ENCODE measurements at regions of chr10 and their contacts with region 1.

Region 1: DNA sequence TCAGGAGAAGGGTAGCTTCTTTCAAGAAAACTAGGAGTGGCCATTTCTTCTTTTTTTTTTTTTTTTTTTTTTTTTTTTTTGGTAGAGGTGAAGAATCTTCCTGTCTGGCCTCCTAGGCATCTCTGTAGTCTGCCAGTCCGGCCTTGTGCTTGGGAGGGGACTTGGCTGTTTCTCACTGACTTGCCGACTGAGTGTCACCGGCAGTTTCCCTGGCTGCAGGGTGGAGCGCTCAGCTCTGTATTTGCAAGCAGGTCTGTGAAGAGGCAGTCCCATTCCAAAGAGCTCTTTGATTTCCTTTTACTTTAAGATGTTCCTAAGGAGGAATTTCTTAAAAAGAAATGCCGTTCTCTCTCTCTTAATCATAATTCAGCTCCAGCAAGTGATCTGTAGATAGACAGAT is 212.6 kb downstream of the ADRA2A start:
- DNase-seq: no peak
- H3K4me3 ChIP-seq: no peak overlapping the region
- H3K27ac ChIP-seq: no peak overlapping the region
- H3K4me1 ChIP-seq: no peaks in the 10 kb centered on the region
- H3K27me3 ChIP-seq: no peaks in the 10 kb centered on the region
- CTCF ChIP-seq: no peak
- POLR2A ChIP-seq: no peak

Region 2: GRCh38 chr10:111344804-111345203 is 55.3 kb after region 1 on chr10:
- intact Hi-C with region 1: no loop called
- DNase-seq: no peak
- H3K4me3 ChIP-seq: no peak overlapping the region
- H3K27ac ChIP-seq: no peak overlapping the region
- H3K4me1 ChIP-seq: no peaks in the 10 kb centered on the region
- H3K27me3 ChIP-seq: no peaks in the 10 kb centered on the region
- CTCF ChIP-seq: no peak
- POLR2A ChIP-seq: no peak

Region 3: GRCh38 chr10:111360260-111360925 is 70.9 kb after region 1 on chr10:
- intact Hi-C with region 1: no loop called
- DNase-seq: peak in 1 of 2 donors; percentile 24
- H3K4me3 ChIP-seq: no peak overlapping the region
- H3K27ac ChIP-seq: no peak overlapping the region
- H3K4me1 ChIP-seq: no peaks in the 10 kb centered on the region
- H3K27me3 ChIP-seq: no peaks in the 10 kb centered on the region
- CTCF ChIP-seq: peak in 1 of 3 donors; percentile 38
- POLR2A ChIP-seq: no peak

Region 4: DNA sequence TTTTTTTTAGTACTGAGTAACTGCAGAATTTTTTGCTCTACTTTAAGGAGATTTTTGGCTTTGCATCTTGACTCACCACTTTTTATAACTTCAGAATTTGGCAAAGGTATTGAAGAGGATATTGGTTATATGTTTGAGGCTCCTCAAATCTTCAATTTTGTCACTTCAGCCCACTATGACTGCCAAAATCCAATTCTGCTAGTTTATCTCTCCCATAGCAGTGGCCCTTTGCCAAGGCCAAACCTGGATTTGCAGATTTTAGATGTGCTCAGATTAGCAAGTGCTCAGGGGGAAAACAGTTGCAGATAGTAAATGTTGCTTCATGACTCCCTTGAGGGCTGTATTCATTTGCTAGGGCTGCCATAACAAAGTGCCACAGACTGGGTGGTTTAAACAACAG is 214.9 kb after region 1 on chr10:
- intact Hi-C with region 1: loop called (anchors 5 kb)
- DNase-seq: no peak
- H3K4me3 ChIP-seq: no peak overlapping the region
- H3K27ac ChIP-seq: no peak overlapping the region
- H3K4me1 ChIP-seq: no peaks in the 10 kb centered on the region
- H3K27me3 ChIP-seq: no peaks in the 10 kb centered on the region
- CTCF ChIP-seq: no peak
- POLR2A ChIP-seq: no peak

Region 5: DNA sequence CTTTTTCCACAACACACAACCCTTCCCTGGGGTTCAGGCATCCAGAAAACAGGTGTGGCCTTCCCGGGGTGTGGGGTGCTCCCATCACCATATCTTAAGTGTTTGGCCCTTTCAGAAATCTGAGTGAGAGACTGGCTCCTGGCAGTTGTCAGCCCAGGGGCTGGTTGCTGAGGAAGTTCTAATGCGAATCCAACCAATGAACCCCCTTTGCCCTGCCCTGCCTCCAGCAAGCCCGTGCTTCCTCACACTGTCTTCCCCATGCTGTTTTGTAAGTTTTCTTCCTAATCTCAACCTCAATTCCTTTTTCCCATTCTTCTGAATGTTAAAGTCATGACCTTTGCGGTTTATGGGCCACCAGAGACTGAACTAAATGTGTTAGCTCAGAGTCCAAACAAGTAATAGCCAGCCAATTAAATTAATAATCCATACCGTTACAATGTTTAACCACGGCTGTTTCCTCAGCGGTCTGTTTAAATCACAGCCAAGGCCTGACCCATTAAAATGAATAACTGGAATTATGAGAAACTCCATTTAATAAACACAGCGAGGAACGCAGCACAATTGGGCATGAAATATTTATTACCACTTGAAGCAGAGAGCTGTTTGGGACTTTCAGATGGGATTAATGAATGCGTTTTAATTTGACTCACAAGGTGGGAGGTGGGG is 1569.7 kb after region 1 on chr10:
- intact Hi-C with region 1: no loop called
- DNase-seq: no peak
- H3K4me3 ChIP-seq: no peak overlapping the region
- H3K27ac ChIP-seq: no peak overlapping the region
- H3K4me1 ChIP-seq: no peaks in the 10 kb centered on the region
- H3K27me3 ChIP-seq: no peaks in the 10 kb centered on the region
- CTCF ChIP-seq: no peak
- POLR2A ChIP-seq: no peak

Measured in breast epithelium (tissue), 4 donors.